ENCODE measurements at regions of chr6 and their contacts with region 1.

Region 1: DNA sequence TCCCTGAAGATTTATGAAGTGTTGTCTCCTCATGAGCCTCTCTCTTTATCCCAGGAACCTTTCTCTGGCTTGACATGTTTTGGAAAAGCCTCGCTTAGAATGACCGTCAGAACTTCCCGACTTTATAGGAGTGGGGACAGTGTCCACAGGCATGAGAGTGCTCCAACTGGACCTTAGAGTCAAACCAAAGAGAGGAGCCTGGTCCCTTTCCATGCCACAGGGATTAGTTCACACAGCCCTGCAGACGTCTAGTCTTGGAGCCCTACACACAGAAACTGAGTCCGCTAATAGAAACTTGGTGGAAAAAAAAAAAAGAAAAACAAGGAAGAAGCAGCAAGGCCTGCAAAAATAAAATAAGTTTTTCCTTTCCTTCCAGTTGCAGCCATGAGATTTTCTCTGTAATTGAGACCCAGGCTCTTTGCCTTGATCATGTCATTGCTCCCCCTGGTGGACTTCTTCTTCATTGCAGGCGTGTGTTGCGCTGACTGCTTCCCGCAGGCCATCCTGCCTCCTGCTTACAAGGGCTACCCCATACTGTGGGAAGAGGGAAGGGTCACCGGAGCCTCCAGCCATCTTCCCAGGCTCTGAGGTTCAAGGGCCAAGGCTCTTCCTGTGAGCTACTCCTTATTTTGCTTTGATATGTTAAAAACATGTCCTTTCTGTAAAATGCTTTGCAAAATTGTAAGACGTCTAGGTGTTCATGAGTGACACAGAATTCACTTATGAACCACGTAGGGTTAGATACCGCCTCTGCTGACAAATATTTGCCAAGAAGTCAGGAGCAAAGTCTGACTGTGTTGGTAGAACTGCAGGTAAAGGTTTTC is 201.0 kb downstream of the UST start:
- DNase-seq: peak; percentile 78
- ATAC-seq: peak; percentile 98
- H3K4me3 ChIP-seq: no peak overlapping the region
- H3K27ac ChIP-seq: no peak overlapping the region
- H3K4me1 ChIP-seq: no peaks in the 10 kb centered on the region
- H3K27me3 ChIP-seq: no peaks in the 10 kb centered on the region
- CTCF ChIP-seq: peak; percentile 94

Region 2: DNA sequence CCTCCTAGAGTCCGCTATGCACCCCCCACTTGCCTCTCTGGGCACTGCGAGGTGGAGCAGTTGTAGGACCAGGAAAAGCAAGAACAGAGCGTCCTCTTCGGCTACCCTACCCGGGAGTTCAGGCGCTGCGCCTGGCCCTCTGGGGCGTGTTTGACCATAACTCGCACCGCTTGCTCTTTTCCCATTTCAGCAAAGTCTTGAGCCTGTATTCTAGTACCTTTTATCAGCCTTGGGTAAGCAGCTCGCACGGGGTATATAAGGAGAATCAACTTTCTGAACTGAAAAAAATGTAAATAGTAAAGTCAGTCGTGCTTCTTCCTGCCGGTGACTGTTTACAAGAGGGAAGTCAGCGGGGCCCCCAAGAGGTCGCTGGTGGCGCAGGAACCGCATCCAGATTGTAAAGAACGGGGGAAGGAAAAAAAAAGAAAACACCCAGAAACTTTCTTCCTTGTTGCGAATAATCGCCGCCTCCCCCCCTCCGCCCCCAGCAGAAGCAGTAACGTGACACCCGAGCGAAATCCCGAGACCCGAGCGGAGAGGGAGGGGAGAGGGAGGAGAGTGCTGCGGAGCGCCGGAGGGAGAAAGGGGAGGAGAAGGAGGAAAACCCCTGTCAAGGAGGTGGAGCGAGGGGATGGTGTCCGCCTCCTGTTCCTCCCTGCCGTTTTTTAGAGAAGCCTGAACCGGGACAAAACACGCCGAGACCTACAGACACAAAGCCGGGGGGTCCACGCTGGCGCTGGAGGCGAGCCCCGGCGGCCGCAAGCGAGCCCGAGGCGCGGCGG is 201.3 kb before region 1 on chr6 and contains the start of gene UST:
- intact Hi-C with region 1: loop called (anchors 10 kb)
- DNase-seq: peak; percentile 91
- ATAC-seq: peak; percentile 85
- H3K4me3 ChIP-seq: peak within 1 kb of the TSS; percentile 82
- H3K27ac ChIP-seq: peak within 1 kb of the TSS; percentile 78
- H3K4me1 ChIP-seq: peaks cover 5% of the 10 kb centered on the region
- H3K27me3 ChIP-seq: no peaks in the 10 kb centered on the region
- CTCF ChIP-seq: peak; percentile 48
- total RNA-seq, gene UST: 11.8 TPM

Region 3: DNA sequence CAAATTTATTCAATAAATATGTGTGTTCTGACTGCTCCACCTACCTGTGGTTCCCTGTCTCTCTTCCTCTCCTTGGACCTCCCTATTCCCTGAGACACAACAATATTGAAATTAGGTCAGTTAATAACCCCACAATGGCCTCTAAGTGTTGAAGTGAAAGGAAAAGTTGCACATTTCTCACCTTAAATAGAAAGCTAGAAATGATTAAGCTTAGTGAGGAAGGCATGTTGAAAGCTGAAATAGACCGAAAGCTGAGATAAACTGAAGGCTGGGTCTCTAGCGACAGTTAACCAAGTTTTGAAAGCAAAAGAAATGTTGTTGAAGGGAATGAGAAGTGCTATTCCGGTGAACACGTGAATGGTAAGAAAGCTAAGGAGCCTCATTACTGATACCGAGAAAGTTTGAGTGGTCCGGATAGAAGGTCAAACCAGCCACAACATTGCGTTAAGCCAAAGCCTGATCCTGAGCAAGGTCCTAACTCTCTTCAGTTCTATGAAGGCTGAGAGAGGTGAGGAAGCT is 166.9 kb before region 1 on chr6:
- intact Hi-C with region 1: no loop called
- DNase-seq: no peak
- ATAC-seq: no peak
- H3K4me3 ChIP-seq: no peak overlapping the region
- H3K27ac ChIP-seq: no peak overlapping the region
- H3K4me1 ChIP-seq: peaks cover 22% of the 10 kb centered on the region
- H3K27me3 ChIP-seq: no peaks in the 10 kb centered on the region
- CTCF ChIP-seq: no peak

Measured in upper lobe of right lung (tissue), 1 donor.